Activated B cell treated with CpG ODN at 0.5 μM for 24 hours (primary cell): ENCODE measurements at regions of chr9 and their contacts with region 1.

Region 1: DNA sequence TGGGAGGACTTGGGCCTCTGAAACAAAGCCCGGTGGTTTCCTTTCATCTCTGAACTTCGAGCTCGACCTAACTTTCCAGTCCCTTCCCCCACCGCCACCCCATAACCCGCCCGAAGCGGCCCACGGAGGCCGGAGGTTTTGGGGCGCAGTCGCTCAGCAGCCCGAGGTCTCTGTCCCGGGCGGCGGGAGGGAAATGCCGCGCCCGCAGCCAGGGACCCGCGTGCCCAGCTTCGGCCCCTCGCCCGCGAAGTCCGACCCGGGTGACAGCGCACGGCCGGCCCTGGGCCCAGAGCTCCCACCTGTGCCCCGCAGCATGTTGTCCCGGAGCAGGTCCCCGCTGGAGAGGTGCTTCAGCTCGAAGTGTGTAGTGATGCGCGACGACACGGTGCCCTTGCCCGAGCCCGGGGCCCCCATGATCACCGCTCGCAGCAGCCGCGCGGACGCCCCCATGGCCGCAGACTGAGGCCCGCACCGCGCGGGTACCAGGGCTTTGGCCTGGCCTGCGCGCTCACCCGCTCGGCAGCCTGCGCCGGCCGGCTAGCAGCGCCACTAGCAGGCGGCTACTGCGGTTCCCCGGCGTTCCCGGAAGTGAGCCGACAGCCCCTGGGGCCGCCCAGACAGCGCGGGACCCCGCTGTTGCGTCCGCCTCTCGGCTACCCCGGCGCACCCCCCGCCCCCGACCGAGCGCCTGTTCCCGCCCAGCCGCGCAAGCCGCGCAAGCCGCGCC is at the start of gene AK3:
- DNase-seq: peak; percentile 79
- ATAC-seq: peak; percentile 93
- H3K4me3 Mint-ChIP-seq: peak within 1 kb of the TSS; percentile 90
- H3K27ac Mint-ChIP-seq: peak within 1 kb of the TSS; percentile 83
- H3K4me1 Mint-ChIP-seq: peaks cover 30% of the 10 kb centered on the region
- H3K27me3 Mint-ChIP-seq: no peaks in the 10 kb centered on the region
- CTCF ChIP-seq: no peak
- total RNA-seq, gene AK3: 14.5 and 16.9 TPM in 2 replicates

Region 2: DNA sequence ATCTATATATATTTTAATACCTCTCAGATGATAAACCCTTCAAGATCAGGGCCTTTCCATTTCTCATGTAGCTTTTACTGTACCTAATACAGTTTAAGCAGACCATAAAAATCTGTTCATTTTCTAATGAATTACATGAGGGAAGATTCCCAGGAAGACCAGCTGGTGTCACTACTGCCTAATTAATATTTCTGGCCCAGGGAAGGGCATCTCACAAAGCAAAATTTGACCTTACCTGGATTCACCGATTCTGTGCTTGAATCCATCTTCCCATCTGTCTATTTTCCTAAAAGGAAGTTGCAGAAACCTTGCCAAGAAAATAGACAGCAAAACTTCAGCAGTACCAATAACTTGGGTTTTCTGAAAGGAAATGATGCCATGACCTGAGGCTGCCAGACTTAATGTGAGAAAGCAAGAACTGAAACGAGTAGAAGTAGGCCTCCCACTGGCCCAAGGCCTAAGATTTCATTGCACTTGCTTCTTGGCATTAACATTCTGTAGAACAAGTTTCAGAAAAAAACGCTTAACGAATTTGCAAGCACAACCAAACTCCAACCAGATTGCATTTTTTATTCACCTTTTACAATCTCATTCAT is 358.0 kb before region 1 on chr9:
- CTCF ChIA-PET with region 1: no interaction called
- POLR2A ChIA-PET with region 1: no interaction called
- intact Hi-C with region 1: loop called (anchors 5 kb)
- DNase-seq: no peak
- ATAC-seq: no peak
- H3K4me3 Mint-ChIP-seq: no peak overlapping the region
- H3K27ac Mint-ChIP-seq: no peak overlapping the region
- H3K4me1 Mint-ChIP-seq: no peaks in the 10 kb centered on the region
- H3K27me3 Mint-ChIP-seq: peaks cover 8% of the 10 kb centered on the region
- CTCF ChIP-seq: no peak

Region 3: DNA sequence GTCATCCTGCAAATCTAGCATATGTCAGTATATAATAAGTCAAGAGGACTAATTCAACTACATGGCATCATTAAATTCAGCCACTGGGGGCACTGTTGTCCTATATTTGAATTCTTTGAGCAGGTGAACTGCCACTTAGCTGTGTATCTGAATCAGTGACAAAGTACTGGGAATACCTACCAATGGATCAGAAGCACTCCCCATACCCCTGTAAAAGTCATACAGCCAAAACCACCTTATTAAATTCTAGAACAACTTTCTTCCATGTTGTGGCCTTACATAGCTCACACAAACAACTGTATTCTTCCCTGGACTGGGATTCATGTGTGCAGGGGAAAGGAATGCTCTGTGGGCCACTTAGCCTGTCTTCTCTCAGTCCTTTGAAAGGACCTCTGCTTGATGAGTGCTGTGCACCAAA is 136.1 kb before region 1 on chr9:
- CTCF ChIA-PET with region 1: no interaction called
- POLR2A ChIA-PET with region 1: no interaction called
- intact Hi-C with region 1: loop called (anchors 5 kb)
- DNase-seq: no peak
- ATAC-seq: peak; percentile 70
- H3K4me3 Mint-ChIP-seq: no peak overlapping the region
- H3K27ac Mint-ChIP-seq: no peak overlapping the region
- H3K4me1 Mint-ChIP-seq: peaks cover 4% of the 10 kb centered on the region
- H3K27me3 Mint-ChIP-seq: peaks cover 4% of the 10 kb centered on the region
- CTCF ChIP-seq: no peak

Region 4: GRCh38 chr9:4679268-4680172 is 61.3 kb before region 1 on chr9 and contains the start of gene CDC37L1:
- CTCF ChIA-PET with region 1: interaction called, 3 read pairs
- POLR2A ChIA-PET with region 1: interaction called, 21 read pairs
- intact Hi-C with region 1: loop called (anchors 1 kb)
- DNase-seq: peak; percentile 100
- ATAC-seq: peak; percentile 95
- H3K4me3 Mint-ChIP-seq: no peak within 1 kb of the TSS
- H3K27ac Mint-ChIP-seq: no peak within 1 kb of the TSS
- H3K4me1 Mint-ChIP-seq: peaks cover 7% of the 10 kb centered on the region
- H3K27me3 Mint-ChIP-seq: no peaks in the 10 kb centered on the region
- CTCF ChIP-seq: no peak
- total RNA-seq, gene CDC37L1: 12.3 and 14.7 TPM in 2 replicates

Region 5: GRCh38 chr9:6008169-6008979 is 1267.6 kb after region 1 on chr9:
- CTCF ChIA-PET with region 1: no interaction called
- POLR2A ChIA-PET with region 1: no interaction called
- intact Hi-C with region 1: loop called (anchors 2 kb)
- DNase-seq: peak; percentile 82
- ATAC-seq: peak; percentile 75
- H3K4me3 Mint-ChIP-seq: peak overlapping the region; percentile 85
- H3K27ac Mint-ChIP-seq: peak overlapping the region; percentile 87
- H3K4me1 Mint-ChIP-seq: peaks cover 57% of the 10 kb centered on the region
- H3K27me3 Mint-ChIP-seq: no peaks in the 10 kb centered on the region
- CTCF ChIP-seq: no peak

Region 6: DNA sequence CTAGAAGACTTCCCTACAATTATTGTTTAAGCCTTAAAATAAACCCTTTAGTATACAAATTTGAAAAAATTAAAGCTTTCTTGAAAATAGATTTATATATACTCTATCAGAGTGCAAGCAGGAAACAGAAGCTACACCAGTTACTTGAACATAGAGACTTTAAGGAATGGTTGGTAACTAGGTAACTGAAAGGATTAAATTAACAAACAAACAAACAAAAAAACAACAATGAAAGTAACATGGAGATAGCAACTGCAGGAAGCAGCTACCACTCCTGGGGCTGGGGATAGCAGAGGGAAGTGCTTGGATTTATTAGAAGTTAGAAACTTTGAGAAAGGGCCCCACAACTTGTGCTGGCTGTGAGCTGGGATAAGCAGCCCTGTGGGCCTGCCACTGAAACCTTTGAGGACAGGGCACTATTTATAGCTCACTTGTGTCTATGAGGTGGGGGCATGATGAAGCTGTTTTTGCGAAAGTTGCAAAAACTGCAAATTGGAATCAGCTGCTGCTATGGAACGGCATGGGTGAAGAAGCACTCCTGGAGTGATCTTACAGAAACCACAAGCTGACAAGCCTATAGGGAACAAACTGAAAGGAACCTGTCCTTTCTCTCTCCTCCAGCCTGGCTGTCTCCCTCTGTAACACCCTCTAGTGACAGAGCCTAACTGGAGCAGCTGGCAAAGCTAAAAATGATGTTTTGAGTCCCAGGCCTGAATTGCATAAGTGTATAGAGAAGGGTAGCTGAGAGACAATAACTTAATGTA is 1366.0 kb after region 1 on chr9:
- CTCF ChIA-PET with region 1: no interaction called
- POLR2A ChIA-PET with region 1: no interaction called
- intact Hi-C with region 1: no loop called
- DNase-seq: no peak
- ATAC-seq: no peak
- H3K4me3 Mint-ChIP-seq: no peak overlapping the region
- H3K27ac Mint-ChIP-seq: no peak overlapping the region
- H3K4me1 Mint-ChIP-seq: no peaks in the 10 kb centered on the region
- H3K27me3 Mint-ChIP-seq: no peaks in the 10 kb centered on the region
- CTCF ChIP-seq: no peak